Activated CD4-positive, alpha-beta T cell treated with anti-CD3 and anti-CD28 coated beads for 36 hours (primary cell): ENCODE measurements at regions of chr12 and their contacts with region 1.

Region 1: DNA sequence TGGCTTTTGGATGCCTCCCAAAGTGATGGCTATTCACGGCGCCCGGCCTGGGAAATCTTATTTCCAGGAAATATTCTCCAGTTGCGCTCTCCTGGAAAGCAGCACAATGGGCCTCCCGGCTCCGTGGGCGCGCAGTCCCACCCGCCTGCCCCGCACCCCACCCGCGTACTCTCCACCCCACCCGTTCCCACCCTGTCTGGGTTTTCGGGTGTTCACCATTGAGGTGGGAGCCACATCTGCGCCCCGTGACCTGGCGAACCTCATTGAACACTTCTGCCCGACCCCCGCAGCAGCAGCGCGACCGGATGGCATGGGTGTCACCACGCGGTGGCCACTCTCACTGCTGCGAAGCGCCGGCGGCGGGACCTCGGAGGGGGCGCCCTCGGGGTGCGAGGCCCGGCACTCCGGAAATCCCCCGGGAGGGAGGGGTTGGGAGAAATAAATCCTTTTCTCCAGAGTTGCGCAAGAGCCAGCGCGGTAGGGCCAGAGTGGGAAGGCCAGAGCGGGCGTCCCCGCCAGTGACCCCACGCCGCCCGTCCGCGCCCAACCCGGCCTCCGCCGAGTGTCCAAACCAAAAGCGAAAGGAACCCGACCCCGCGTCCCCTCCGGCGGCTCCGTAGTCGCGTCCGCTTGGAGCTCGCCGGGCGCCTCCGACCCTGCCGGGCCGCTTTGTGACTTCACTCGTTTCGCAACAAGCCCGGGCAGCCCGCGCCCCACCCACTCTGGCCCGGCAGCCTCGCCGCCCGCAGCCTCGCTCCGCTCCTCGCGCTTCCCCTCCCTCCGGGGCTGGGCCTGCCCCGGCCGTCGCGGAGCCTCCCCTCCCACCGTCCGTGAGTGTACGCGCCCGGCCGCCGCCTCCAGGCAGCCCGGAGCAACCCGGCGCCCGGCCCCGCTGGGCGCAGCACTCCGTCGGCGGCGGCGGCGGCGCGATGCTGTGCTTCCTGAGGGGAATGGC is at the start of gene DRAM1:
- DNase-seq: peak; percentile 85
- ATAC-seq: peak; percentile 91
- H3K4me3 Mint-ChIP-seq: peak within 1 kb of the TSS; percentile 75
- H3K27ac Mint-ChIP-seq: peak within 1 kb of the TSS; percentile 59
- H3K4me1 Mint-ChIP-seq: peaks cover 6% of the 10 kb centered on the region
- H3K27me3 Mint-ChIP-seq: peaks cover 3% of the 10 kb centered on the region
- total RNA-seq, gene DRAM1: 2.3 to 2.4 TPM

Region 2: DNA sequence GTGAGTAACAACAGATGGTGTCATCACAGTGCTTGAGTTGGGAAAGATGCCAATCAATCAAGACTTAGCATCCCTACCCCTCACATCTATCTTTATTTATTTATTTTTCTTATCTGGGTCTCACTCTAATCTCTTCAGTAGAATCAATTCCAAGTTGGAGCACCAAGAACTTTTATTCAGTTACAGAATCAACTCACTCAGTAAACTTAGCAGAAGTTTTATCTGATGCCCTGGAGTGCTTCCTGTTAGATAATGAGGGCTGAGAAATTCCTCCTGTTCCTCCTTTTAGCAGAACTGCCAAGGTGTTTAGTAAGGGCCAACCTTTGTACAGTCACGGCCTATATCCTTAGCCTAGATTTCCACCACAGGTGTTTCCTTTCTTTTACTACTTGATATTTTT is 655.8 kb before region 1 on chr12:
- CTCF ChIA-PET with region 1: no interaction called
- POLR2A ChIA-PET with region 1: no interaction called
- intact Hi-C with region 1: no loop called
- DNase-seq: no peak
- ATAC-seq: no peak
- H3K4me3 Mint-ChIP-seq: no peak overlapping the region
- H3K27ac Mint-ChIP-seq: no peak overlapping the region
- H3K4me1 Mint-ChIP-seq: no peaks in the 10 kb centered on the region
- H3K27me3 Mint-ChIP-seq: peaks cover 9% of the 10 kb centered on the region

Region 3: GRCh38 chr12:101697197-101697929 is 179.8 kb before region 1 on chr12 and contains the start of gene CHPT1:
- CTCF ChIA-PET with region 1: no interaction called
- POLR2A ChIA-PET with region 1: no interaction called
- intact Hi-C with region 1: loop called in 1 of 2 experiments (anchors 5 kb)
- DNase-seq: peak; percentile 76
- ATAC-seq: peak; percentile 74
- H3K4me3 Mint-ChIP-seq: peak within 1 kb of the TSS; percentile 81
- H3K27ac Mint-ChIP-seq: peak within 1 kb of the TSS; percentile 83
- H3K4me1 Mint-ChIP-seq: peaks cover 29% of the 10 kb centered on the region
- H3K27me3 Mint-ChIP-seq: no peaks in the 10 kb centered on the region
- total RNA-seq, gene CHPT1: 12.2 to 15.2 TPM

Region 4: DNA sequence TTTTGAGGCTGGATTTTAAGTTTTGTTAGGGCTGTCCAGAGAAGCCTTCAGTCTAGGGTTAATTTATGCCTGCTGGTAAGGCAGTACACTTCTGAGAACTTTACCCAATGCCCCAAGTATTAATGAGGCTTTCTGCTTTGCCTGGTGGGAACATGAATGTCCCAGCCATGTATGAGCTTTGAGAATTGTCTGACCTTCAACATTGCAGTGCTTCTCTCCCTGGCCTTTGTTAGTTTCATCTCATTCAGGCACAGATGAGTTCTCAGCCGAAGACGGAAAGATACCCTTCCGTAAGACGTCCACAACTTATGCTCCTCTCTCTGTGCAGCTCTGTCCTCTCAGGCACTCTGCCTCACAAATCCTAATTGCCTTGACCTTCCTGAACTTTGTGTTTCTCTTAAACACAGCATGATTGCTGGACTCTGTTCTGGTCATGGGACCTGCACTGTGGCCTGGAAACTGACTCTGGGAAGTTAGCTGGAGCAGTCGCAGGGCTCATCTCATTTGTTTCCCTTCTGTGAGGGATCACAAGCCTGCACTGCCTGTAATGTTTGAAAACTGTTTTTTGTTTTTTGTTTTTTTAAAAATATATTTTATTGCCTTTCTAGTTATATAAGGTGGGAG is 164.0 kb before region 1 on chr12:
- CTCF ChIA-PET with region 1: no interaction called
- POLR2A ChIA-PET with region 1: no interaction called
- intact Hi-C with region 1: no loop called
- DNase-seq: no peak
- ATAC-seq: no peak
- H3K4me3 Mint-ChIP-seq: no peak overlapping the region
- H3K27ac Mint-ChIP-seq: no peak overlapping the region
- H3K4me1 Mint-ChIP-seq: peaks cover 5% of the 10 kb centered on the region
- H3K27me3 Mint-ChIP-seq: no peaks in the 10 kb centered on the region

Region 5: DNA sequence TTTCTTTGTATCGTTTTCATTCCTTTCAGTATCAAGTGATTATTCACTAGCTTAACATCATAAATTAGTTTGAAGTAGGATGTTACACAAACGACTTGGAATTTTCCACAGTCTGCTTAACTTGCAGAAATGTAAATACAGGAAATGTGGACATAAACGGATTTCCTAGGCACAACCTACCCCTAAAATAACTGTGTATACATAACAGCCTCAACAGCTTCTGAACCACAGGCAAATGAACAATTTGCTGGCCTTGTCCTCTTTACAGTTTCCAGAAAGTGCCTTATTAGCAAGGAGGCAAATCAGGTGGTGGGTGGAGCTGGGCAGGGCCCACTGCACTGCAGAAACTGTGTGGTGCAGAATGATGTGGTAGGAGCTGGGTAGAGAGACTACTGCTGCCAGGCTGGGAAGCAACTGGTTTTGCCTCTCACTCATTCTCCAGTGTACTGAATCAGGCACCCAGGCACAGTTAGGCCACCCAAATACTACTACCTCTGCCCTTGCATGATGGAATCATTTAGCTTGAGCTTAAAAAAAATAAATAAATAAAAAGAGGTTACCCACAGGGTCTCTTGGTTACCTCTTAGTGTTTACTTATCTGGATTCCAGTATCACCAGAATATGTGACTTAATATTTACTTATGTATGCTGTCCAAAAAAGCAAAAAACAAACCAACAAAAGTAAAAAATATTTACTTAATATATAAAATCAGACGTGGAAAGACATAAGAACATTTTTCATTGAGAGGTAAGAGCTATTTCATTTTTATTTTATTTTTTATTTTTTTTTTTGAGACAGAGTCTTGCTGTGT is 14.5 kb after region 1 on chr12:
- CTCF ChIA-PET with region 1: no interaction called
- POLR2A ChIA-PET with region 1: no interaction called
- intact Hi-C with region 1: no loop called
- DNase-seq: no peak
- ATAC-seq: no peak
- H3K4me3 Mint-ChIP-seq: no peak overlapping the region
- H3K27ac Mint-ChIP-seq: no peak overlapping the region
- H3K4me1 Mint-ChIP-seq: peaks cover 3% of the 10 kb centered on the region
- H3K27me3 Mint-ChIP-seq: no peaks in the 10 kb centered on the region

Region 6: GRCh38 chr12:102061560-102062418 is 184.7 kb after region 1 on chr12 and contains the start of gene WASHC3:
- CTCF ChIA-PET with region 1: no interaction called
- POLR2A ChIA-PET with region 1: no interaction called
- intact Hi-C with region 1: loop called in 1 of 2 experiments (anchors 1 kb)
- DNase-seq: peak; percentile 98
- ATAC-seq: peak; percentile 93
- H3K4me3 Mint-ChIP-seq: peak within 1 kb of the TSS; percentile 94
- H3K27ac Mint-ChIP-seq: peak within 1 kb of the TSS; percentile 99
- H3K4me1 Mint-ChIP-seq: peaks cover 29% of the 10 kb centered on the region
- H3K27me3 Mint-ChIP-seq: no peaks in the 10 kb centered on the region
- total RNA-seq, gene WASHC3: 36.1 to 64.4 TPM

Region 7: GRCh38 chr12:102119674-102120563 is 242.8 kb after region 1 on chr12 and contains the starts of genes NUP37 and PARPBP:
- CTCF ChIA-PET with region 1: no interaction called
- POLR2A ChIA-PET with region 1: no interaction called
- intact Hi-C with region 1: loop called in 1 of 2 experiments (anchors 1 kb)
- DNase-seq: peak; percentile 96
- ATAC-seq: peak; percentile 93
- H3K4me3 Mint-ChIP-seq: peak within 1 kb of the TSS; percentile 95
- H3K27ac Mint-ChIP-seq: peak within 1 kb of the TSS; percentile 95
- H3K4me1 Mint-ChIP-seq: peaks cover 19% of the 10 kb centered on the region
- H3K27me3 Mint-ChIP-seq: no peaks in the 10 kb centered on the region
- total RNA-seq, gene NUP37: 100 to 108 TPM
- total RNA-seq, gene PARPBP: 21.7 to 26.4 TPM